ENCODE measurements at regions of chr1 and their contacts with region 1.

Region 1: DNA sequence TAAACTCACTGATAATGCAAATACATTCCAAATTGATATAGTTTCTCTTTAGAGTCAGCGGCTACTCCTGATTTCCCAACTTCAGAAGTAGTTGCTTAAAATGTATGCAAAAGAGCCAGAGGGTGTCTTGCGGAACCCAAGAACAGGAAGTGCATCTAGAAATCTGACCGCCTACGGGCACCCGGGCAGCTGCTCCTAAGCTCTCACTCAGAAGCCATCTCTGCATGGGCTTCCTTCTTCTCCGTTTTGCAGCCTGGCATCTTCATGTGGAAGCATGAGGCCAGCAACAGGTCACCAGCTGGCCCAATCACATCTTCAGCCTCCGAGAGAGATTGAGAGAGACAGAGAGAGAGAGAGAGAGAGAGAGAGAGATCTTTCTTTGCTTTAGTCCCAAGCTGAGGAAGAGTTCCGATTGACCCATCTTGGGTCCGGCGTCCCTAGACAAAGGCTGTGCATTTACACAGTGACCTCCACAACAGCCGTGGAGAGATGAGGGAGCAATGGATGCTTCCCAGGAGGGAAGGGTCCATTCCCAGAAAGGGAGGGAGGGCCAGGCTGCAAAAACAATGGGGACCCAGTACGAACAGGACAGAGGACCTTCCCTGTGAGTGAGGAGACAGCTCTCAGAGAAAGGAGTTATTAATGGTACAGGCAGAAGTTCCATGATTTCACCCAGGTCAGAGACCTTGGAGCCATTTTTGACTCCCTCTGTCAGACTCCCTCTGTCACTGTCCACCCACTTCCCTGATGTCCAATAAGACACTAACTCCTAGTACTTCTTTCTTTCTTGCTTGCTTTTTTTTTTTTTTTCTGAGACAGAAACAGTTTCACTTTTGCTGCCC is 28.2 kb upstream of the SLC30A1 start:
- DNase-seq: peak; percentile 50 to 85 (median 63)
- ATAC-seq: peak; percentile 81
- H3K4me3 ChIP-seq: peak overlapping the region; percentile 49
- H3K27ac ChIP-seq: peak overlapping the region; percentile 83
- H3K4me1 ChIP-seq: peaks cover 36 to 51% of the 10 kb centered on the region in 2 experiments; a peak in 4 of 5 replicates
- H3K27me3 ChIP-seq: no peaks in the 10 kb centered on the region
- CTCF ChIP-seq: no peak
- EP300 ChIP-seq: peak; percentile 17; the same call in 1 of the 2 replicates
- POLR2A ChIP-seq: peak; percentile 62
- RAD21 ChIP-seq: peak in 1 of 2 experiments; percentile 32; a peak in 2 of 4 replicates

Region 2: GRCh38 chr1:211578640-211579433 is 28.3 kb before region 1 on chr1 and contains the start of gene SLC30A1:
- CTCF ChIA-PET with region 1: no interaction called
- POLR2A ChIA-PET with region 1: interaction called, 31 read pairs
- in situ Hi-C with region 1: no loop called
- intact Hi-C with region 1: loop called (anchors 2 kb)
- DNase-seq: peak; percentile 100
- ATAC-seq: peak; percentile 92
- H3K4me3 ChIP-seq: peak within 1 kb of the TSS; percentile 75
- H3K27ac ChIP-seq: peak within 1 kb of the TSS; percentile 84
- H3K4me1 ChIP-seq: peaks cover 26% of the 10 kb centered on the region in 2 experiments; a peak in 4 of 5 replicates
- H3K27me3 ChIP-seq: no peaks in the 10 kb centered on the region
- CTCF ChIP-seq: peak in 2 of 3 experiments; percentile 17 to 41; a peak in 1 of 6 replicates
- EP300 ChIP-seq: peak; percentile 23; the same call in 1 of the 2 replicates
- POLR2A ChIP-seq: peak; percentile 82
- RAD21 ChIP-seq: peak; percentile 17 to 31; a peak in 2 of 4 replicates
- polyA plus RNA-seq, gene SLC30A1: 4.1 to 4.2 TPM

Region 3: GRCh38 chr1:211596418-211597181 is 10.5 kb before region 1 on chr1:
- CTCF ChIA-PET with region 1: no interaction called
- POLR2A ChIA-PET with region 1: interaction called, 15 read pairs
- in situ Hi-C with region 1: no loop called
- intact Hi-C with region 1: no loop called
- DNase-seq: no peak
- ATAC-seq: no peak
- H3K4me3 ChIP-seq: no peak overlapping the region
- H3K27ac ChIP-seq: no peak overlapping the region
- H3K4me1 ChIP-seq: peaks cover 0 to 8% of the 10 kb centered on the region in 2 experiments; a peak in 3 of 5 replicates
- H3K27me3 ChIP-seq: no peaks in the 10 kb centered on the region
- CTCF ChIP-seq: no peak
- EP300 ChIP-seq: no peak
- POLR2A ChIP-seq: no peak
- RAD21 ChIP-seq: no peak

Region 4: DNA sequence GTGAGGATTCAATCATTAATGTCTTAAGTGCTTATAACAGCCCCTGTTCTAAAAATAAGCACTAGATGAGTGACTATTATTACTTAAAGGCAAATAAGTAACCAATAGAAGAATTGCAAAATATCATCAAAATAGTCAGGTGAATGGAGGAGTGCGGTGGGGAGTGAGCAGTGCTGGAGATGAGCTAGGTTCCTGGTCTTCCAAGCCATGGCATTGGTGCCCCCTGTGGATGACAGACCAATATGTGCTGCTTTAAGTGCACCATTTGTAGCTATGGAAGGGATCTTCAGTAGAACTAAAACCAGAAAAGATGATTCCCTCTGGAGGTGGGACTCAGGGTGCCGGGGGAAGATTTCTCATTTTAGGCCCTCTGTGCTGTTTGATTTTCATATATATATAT is 17.9 kb after region 1 on chr1:
- CTCF ChIA-PET with region 1: no interaction called
- POLR2A ChIA-PET with region 1: interaction called, 19 read pairs
- in situ Hi-C with region 1: no loop called
- intact Hi-C with region 1: loop called (anchors 1 kb)
- DNase-seq: peak in 3 of 4 experiments; percentile 48 to 68 (median 63)
- ATAC-seq: peak; percentile 77
- H3K4me3 ChIP-seq: no peak overlapping the region
- H3K27ac ChIP-seq: no peak overlapping the region
- H3K4me1 ChIP-seq: peaks cover 14 to 21% of the 10 kb centered on the region in 2 experiments; a peak in 4 of 5 replicates
- H3K27me3 ChIP-seq: no peaks in the 10 kb centered on the region
- CTCF ChIP-seq: peak; percentile 57 to 72 (median 64)
- EP300 ChIP-seq: no peak
- POLR2A ChIP-seq: no peak
- RAD21 ChIP-seq: peak; percentile 65 to 71

Region 5: DNA sequence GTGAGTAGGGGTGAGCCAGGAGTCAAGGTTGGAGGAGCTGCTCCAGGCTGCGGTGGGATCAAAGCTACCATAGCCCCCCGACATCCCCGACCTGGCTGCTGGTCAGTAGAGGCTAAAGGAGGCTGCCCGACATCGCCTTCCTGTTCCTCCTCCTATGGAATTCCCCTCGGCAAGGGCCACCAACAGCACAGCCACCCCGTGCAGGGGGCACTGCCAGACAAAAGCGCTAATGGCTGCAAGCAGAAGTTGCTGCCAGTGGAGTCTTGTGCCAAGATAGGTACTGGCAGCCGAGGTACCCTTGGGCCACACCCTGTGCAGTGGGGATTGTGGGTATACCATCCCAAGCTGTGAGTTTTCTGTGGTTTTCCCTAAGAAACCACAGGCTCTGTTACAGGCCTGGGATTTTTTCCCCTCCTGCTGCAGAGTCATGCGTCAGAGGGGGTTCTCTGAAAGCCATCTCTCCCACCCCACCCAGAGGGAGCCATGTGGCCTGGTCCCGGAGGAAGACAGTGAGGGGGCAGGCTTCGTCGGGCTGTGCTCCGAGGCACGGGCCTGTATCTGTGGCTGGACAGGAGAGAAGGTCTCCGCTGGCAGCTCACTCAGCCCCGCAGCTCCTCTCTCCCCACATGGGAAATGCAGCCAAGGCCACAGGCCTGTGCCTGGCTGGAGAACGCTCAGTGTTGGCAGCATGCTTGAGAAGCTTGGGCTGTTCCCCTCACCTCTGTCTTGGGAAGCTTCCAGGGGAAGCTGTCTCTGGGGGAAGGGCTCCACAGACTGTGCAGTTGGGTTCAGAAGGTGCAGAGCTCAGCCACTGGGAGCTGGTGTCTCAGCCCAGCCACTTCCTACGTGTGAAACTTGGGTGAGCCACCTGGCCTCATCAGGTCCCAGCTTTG is 25.7 kb after region 1 on chr1:
- CTCF ChIA-PET with region 1: no interaction called
- POLR2A ChIA-PET with region 1: interaction called, 20 read pairs
- in situ Hi-C with region 1: no loop called
- intact Hi-C with region 1: loop called (anchors 1 kb)
- DNase-seq: no peak
- ATAC-seq: peak; percentile 6
- H3K4me3 ChIP-seq: no peak overlapping the region
- H3K27ac ChIP-seq: peak overlapping the region; percentile 54; the same call in 2 of the 3 replicates
- H3K4me1 ChIP-seq: peaks cover 35 to 42% of the 10 kb centered on the region in 2 experiments
- H3K27me3 ChIP-seq: no peaks in the 10 kb centered on the region
- CTCF ChIP-seq: no peak
- EP300 ChIP-seq: no peak
- POLR2A ChIP-seq: no peak
- RAD21 ChIP-seq: no peak

Region 6: GRCh38 chr1:211643324-211644212 is 36.4 kb after region 1 on chr1:
- CTCF ChIA-PET with region 1: no interaction called
- POLR2A ChIA-PET with region 1: interaction called, 10 read pairs
- in situ Hi-C with region 1: no loop called
- intact Hi-C with region 1: no loop called
- DNase-seq: peak; percentile 46 to 72 (median 59)
- ATAC-seq: peak; percentile 83
- H3K4me3 ChIP-seq: no peak overlapping the region
- H3K27ac ChIP-seq: no peak overlapping the region
- H3K4me1 ChIP-seq: peaks cover 10 to 13% of the 10 kb centered on the region in 2 experiments; a peak in 4 of 5 replicates
- H3K27me3 ChIP-seq: no peaks in the 10 kb centered on the region
- CTCF ChIP-seq: no peak
- EP300 ChIP-seq: no peak
- POLR2A ChIP-seq: no peak
- RAD21 ChIP-seq: 0 out of 4 replicates have a peak, but pooled peaks of 1 of the 2 experiments have one; percentile 16

Region 7: DNA sequence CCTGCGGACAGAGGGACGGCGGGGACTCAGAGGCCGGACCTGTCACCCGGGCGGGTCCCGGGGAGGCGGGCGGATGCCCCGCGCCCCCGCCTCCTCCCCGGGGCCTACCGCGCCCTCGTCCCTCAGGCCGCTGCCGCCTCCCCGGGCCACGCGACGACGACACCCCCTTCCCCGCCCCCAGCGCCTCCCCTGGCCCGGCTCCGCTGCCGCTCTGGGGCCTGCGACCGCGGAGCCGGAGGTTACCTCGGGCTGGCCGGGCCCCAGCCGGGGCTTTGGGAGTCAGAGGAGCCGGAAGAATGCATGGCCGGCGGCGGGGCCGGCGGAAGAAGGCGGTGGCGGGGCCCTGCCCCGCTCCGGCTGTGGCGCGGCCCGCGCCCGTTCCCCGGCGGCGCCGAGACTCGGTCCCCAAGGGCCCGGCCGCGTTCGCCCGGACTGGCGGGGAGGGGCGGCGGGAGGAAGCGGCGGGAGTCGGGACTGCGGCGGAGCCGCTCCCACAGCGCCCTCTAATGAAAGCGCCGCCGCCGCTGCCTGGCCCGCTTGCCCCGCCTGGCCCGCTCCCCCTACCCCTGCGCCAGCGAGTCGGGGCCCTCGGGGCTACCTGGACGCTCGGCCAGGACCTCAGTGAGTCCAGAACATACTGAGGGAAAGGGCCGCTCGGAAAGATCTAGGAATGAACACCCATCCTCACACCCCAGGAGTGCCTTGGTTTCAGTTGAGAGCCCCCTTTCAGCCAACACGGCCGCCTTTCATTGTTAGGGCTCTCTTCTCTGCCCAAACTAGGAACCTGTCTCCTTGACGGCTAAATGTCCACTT is 223.4 kb after region 1 on chr1 and contains the start of gene LPGAT1:
- CTCF ChIA-PET with region 1: no interaction called
- POLR2A ChIA-PET with region 1: no interaction called
- in situ Hi-C with region 1: no loop called
- intact Hi-C with region 1: no loop called
- DNase-seq: peak; percentile 85 to 91 (median 91)
- ATAC-seq: peak; percentile 96
- H3K4me3 ChIP-seq: peak within 1 kb of the TSS; percentile 83
- H3K27ac ChIP-seq: peak within 1 kb of the TSS; percentile 76
- H3K4me1 ChIP-seq: peaks cover 18 to 20% of the 10 kb centered on the region in 2 experiments
- H3K27me3 ChIP-seq: no peaks in the 10 kb centered on the region
- CTCF ChIP-seq: peak; percentile 64 to 92 (median 80)
- EP300 ChIP-seq: no peak
- POLR2A ChIP-seq: no peak
- RAD21 ChIP-seq: peak; percentile 80 to 87
- polyA plus RNA-seq, gene LPGAT1: 5.7 to 6.7 TPM

Region 8: GRCh38 chr1:211944733-211945500 is 337.8 kb after region 1 on chr1:
- CTCF ChIA-PET with region 1: no interaction called
- POLR2A ChIA-PET with region 1: no interaction called
- in situ Hi-C with region 1: no loop called
- intact Hi-C with region 1: no loop called
- DNase-seq: no peak
- ATAC-seq: peak; percentile 44; the same call in 2 of the 3 replicates
- H3K4me3 ChIP-seq: no peak overlapping the region
- H3K27ac ChIP-seq: no peak overlapping the region
- H3K4me1 ChIP-seq: no peaks in the 10 kb centered on the region
- H3K27me3 ChIP-seq: no peaks in the 10 kb centered on the region
- CTCF ChIP-seq: peak; percentile 35 to 53 (median 41); a peak in 4 of 6 replicates
- EP300 ChIP-seq: no peak
- POLR2A ChIP-seq: no peak
- RAD21 ChIP-seq: peak in 1 of 2 experiments; percentile 59; a peak in 3 of 4 replicates